ENCODE measurements at regions of chr3 and their contacts with region 1.

Region 1: GRCh38 chr3:12484198-12484974 is at the start of gene TSEN2:
- DNase-seq: peak; percentile 88
- H3K4me3 ChIP-seq: peak within 1 kb of the TSS; percentile 87
- H3K27ac ChIP-seq: peak within 1 kb of the TSS; percentile 52
- H3K27me3 ChIP-seq: no peaks in the 10 kb centered on the region
- CTCF ChIP-seq: peak; percentile 39
- polyA plus RNA-seq, gene TSEN2: 8.9 and 11.0 TPM in 2 replicates

Region 2: DNA sequence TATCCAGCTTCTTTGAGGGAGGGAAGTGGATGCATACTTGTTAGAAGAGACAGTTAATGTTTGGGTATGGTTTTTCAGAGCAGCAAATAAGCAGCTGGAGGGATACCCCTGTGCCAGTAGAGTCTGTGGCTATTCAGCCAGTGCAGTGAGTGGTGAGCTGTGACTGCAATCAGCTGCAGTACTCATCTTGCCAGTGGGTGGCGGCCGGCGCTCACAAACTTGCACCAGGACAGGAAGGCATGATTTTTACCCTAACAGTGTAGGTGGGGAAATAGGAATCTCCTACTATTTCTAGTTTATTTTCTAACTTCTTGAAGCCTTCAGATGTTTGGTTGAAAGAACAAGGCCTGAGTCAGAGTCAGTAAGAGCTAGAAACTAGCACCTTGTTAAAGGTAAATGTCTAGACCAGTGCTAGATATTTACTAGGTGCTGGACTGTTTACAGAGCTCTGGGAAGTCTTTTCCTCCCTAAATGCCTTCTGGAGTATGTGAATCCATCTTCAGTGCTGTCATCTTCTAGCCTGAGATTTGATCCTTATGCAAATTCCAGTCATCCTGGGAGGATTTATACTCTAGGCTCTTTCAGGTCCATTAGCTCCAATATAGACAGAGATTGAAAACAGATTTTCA is 349.2 kb before region 1 on chr3:
- CTCF ChIA-PET with region 1: interaction called, 353 read pairs
- POLR2A ChIA-PET with region 1: interaction called, 3 read pairs
- DNase-seq: no peak
- H3K4me3 ChIP-seq: no peak overlapping the region
- H3K27ac ChIP-seq: no peak overlapping the region
- H3K27me3 ChIP-seq: peaks cover 20% of the 10 kb centered on the region
- CTCF ChIP-seq: peak; percentile 98

Region 3: GRCh38 chr3:12150112-12150511 is 334.3 kb before region 1 on chr3:
- CTCF ChIA-PET with region 1: interaction called, 10 read pairs
- POLR2A ChIA-PET with region 1: no interaction called
- DNase-seq: no peak
- H3K4me3 ChIP-seq: no peak overlapping the region
- H3K27ac ChIP-seq: no peak overlapping the region
- H3K27me3 ChIP-seq: peaks cover 19% of the 10 kb centered on the region
- CTCF ChIP-seq: no peak

Region 4: DNA sequence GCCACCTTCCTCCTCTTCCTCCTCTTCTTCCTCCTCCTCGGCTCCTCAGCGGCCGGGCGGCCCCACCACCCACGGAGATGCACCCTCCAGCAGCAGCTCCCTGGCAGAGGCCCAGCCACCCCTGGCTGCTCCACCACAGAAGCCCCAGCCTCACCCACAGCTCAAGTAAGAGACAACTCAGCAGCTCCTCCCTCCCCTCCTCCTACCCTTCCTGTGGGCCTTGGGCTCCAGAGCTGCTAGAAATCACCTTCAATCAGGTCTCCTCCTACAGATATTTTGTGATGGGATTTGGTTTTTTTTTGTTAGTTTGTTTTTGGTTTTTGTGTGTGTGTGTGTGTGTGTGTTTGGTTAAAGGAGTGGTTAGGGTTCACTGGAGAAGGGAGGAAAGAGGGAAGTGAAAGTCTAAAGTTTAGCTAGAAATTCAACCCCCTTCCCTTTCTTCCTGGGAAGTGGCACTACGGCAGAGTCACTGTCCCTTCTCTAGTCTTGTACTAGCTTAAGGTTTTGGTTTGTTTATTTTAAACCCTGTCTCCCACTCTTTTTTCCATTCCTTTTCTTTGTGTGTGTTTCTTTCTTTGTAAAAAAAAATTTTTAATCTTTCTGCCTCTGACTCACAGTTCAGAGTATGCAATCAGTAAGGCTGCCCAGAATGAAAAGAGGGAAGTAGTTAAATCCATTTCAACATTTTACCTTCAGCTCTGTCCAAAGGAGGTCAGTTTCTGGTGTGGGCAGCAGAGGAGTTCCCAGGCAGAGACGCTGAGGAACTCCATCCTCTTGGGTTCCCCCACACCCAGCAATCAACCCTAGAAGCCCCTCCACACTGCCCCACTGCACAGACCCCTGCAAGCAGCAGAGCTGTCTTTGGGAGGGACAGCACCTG is 296.7 kb before region 1 on chr3:
- CTCF ChIA-PET with region 1: interaction called, 17 read pairs
- POLR2A ChIA-PET with region 1: interaction called, 4 read pairs
- DNase-seq: no peak
- H3K4me3 ChIP-seq: no peak overlapping the region
- H3K27ac ChIP-seq: peak overlapping the region; percentile 92
- H3K27me3 ChIP-seq: no peaks in the 10 kb centered on the region
- CTCF ChIP-seq: no peak

Region 5: DNA sequence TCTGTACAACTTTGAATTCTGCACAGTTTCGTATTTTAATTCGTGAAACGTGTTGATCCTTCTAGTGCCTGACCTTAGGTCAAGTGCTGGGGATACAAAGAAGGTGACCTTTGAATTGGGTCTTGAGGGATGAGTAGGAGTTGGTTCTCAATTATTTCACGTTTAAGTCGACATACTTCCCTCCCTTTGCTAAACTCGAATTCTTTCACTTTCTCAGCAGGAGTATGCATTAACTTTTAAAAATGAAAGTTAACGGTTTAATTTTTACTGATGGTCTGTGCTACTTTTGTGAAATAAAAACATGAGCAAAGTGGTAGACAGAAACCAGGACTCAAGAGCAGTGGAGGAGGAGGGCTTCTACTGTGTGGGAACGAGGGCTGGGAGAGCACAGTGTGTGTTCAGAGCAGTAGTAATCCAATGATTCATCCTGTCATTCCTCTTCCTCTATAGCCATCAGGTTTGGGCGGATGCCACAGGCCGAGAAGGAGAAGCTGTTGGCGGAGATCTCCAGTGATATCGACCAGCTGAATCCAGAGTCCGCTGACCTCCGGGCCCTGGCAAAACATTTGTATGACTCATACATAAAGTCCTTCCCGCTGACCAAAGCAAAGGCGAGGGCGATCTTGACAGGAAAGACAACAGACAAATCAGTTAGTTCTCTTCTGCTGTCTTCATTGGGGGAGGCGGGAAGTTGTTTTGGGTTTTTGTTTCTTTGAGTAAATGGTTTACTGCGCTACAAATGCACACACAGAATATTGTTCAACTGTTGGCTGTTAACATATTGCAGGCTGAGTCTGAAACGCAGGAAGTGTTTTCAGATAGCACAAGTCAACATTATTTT is 78.7 kb before region 1 on chr3:
- CTCF ChIA-PET with region 1: interaction called, 17 read pairs
- POLR2A ChIA-PET with region 1: no interaction called
- DNase-seq: peak; percentile 86
- H3K4me3 ChIP-seq: no peak overlapping the region
- H3K27ac ChIP-seq: peak overlapping the region; percentile 32
- H3K27me3 ChIP-seq: no peaks in the 10 kb centered on the region
- CTCF ChIP-seq: no peak

Region 6: GRCh38 chr3:12508291-12508700 is 23.9 kb after region 1 on chr3:
- CTCF ChIA-PET with region 1: interaction called, 8 read pairs
- POLR2A ChIA-PET with region 1: interaction called, 17 read pairs
- DNase-seq: peak; percentile 98
- H3K4me3 ChIP-seq: peak overlapping the region; percentile 45
- H3K27ac ChIP-seq: peak overlapping the region; percentile 94
- H3K27me3 ChIP-seq: no peaks in the 10 kb centered on the region
- CTCF ChIP-seq: no peak

Region 7: DNA sequence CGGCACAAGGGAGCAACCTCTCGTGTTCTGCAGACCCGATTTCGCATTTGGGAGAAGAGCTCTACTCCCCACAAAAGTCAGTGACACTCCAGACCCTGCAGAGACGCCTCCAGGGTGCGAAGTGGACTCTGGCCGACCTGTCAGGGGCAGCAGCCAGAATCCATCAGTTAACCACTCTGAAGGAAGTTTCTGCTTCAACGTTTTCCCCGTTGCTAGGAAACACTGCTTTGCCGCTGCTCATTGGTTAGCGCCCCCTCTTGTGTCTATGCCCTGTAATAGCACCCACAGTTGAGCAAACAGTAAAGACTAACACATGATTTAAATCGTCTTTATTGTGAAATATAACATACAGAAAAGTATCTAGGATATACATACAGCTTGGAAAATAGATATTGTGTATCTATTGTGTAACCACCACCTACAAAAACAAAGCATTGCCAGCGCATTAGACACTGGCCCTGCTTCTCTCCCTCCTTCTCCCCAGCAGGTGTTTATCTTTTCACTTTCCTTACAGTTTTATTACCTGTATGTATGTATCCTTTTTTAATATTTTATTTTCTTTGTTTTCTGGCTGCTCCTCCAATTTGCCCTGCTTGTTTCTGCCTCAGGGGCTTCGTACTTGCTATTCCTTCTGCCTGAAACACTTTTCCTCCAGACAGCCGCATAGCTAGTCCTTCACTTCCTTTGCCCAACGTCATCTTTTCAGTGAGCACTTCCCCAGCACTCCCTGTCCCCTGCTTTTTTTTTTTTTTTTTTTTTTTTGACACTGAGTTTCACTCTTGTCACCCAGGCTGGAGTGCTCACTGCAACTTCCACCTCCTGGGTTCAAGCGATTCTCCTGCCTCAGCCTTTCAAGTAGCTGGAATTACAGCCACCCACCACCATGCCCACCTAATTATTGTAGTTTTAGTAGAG is 235.9 kb after region 1 on chr3:
- CTCF ChIA-PET with region 1: no interaction called
- POLR2A ChIA-PET with region 1: no interaction called
- DNase-seq: peak; percentile 56
- H3K4me3 ChIP-seq: peak overlapping the region; percentile 58
- H3K27ac ChIP-seq: no peak overlapping the region
- H3K27me3 ChIP-seq: no peaks in the 10 kb centered on the region
- CTCF ChIP-seq: peak; percentile 98

Region 8: DNA sequence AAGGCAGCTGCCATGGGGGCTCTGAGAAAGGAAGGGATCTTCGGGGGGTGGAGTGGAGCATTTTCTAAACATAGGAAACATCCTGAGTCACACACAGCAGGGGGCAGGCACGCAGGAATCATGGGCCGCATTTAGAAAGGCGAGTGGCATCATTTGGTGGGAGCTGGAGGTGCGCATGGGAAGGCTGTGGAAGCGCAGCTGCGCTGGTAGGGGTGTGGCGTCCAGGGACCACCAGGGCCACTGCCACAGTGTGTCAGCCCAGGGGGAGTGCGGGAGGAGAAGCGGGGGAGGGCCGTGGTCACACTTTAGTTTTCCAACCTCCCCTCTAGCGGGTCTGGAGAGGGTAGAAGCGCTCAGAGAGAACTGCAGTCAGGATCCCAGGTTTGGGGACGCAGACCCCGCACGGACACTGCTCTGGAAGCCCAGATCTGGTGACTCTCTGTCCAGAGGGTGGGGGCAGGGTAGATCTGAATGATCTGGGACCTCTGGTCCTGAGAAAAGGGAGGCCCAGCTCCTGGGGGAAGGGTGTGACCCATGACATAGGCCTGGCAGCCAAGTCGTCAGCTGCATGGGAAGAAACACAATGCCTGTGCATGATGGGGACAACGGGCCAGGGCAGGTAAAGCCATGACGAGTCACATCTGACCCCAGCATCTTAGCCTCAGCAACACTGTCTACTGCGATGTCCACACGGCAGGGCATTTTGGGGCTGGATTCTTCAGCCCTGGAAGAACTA is 676.8 kb after region 1 on chr3:
- CTCF ChIA-PET with region 1: no interaction called
- POLR2A ChIA-PET with region 1: no interaction called
- DNase-seq: no peak
- H3K4me3 ChIP-seq: no peak overlapping the region
- H3K27ac ChIP-seq: no peak overlapping the region
- H3K27me3 ChIP-seq: peaks cover 3% of the 10 kb centered on the region
- CTCF ChIP-seq: no peak

Measured in AG04450 (cell line).